ENCODE measurements at regions of chr2 and their contacts with region 1.

Region 1: DNA sequence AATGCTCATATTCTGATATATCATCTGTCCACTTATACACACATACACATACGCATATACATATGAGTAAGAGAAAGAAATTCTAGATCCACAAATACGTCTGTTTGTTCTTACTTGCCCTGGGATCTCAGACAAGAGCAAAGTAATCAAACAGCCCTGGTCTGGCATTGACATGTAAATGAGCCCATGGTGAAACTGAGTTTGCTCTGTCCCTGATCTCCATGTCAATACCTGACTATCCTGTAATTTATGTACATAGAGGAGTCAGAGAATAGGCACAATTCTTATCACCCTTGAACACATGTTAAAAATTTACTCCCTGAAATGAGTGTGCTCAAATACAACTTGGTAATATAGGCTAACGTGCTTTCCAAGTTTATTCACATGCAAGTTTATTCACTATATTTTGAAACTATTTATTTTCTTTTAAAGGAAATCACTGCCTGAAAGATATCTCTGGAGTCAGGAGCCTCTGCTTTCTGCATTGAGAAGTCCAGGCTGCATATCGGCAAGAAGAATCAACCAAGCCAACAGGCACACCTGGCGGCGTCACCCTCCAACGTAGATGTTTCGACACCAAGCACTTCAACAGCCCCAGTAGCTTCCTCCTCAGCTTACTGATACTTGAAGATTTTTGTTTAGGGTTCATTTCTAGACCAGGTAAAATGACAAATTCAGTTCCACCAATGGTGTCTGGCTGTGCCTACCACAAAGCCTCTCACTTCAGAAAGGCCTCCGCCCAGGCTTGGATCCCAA is 100.6 kb downstream of the CMPK2 start:
- DNase-seq: no peak
- ATAC-seq: no peak
- H3K4me3 ChIP-seq: no peak overlapping the region
- H3K27ac ChIP-seq: no peak overlapping the region
- H3K4me1 ChIP-seq: no peaks in the 10 kb centered on the region
- H3K27me3 ChIP-seq: peaks cover 0 to 7% (median 0%) of the 10 kb centered on the region in 7 donors
- CTCF ChIP-seq: no peak

Region 2: GRCh38 chr2:6648596-6649247 is 116.4 kb before region 1 on chr2:
- intact Hi-C with region 1: no loop called
- DNase-seq: no peak
- ATAC-seq: no peak
- H3K4me3 ChIP-seq: no peak overlapping the region
- H3K27ac ChIP-seq: no peak overlapping the region
- H3K4me1 ChIP-seq: no peaks in the 10 kb centered on the region
- H3K27me3 ChIP-seq: peaks cover 0 to 9% (median 0%) of the 10 kb centered on the region in 7 donors
- CTCF ChIP-seq: no peak

Region 3: DNA sequence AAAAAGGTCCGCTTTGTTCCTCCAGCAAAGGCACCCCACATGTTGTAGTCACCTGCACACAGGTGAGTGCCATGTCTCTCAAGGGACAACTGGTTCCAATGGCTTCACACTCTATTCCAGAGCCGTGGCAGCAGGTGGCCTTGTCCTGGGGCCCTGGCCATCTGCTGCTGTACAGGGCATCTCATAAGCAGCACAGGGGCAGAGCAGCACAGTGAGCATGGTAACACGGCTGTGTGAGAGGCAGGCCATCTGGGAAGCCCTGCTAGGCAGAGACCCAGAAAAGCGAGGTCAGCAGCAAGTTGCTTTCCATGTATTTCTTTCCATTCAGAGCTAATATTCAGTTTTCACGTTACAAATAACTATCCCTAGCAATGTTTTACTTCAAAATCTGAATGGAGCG is 45.8 kb after region 1 on chr2:
- intact Hi-C with region 1: loop called in 1 of 10 experiments (anchors 1 kb)
- DNase-seq: no peak
- ATAC-seq: no peak
- H3K4me3 ChIP-seq: no peak overlapping the region
- H3K27ac ChIP-seq: no peak overlapping the region
- H3K4me1 ChIP-seq: peaks cover 0 to 7% (median 0%) of the 10 kb centered on the region in 9 donors
- H3K27me3 ChIP-seq: peaks cover 0 to 38% (median 5%) of the 10 kb centered on the region in 7 donors
- CTCF ChIP-seq: no peak